ENCODE measurements at regions of chr9 and their contacts with region 1.

Region 1: DNA sequence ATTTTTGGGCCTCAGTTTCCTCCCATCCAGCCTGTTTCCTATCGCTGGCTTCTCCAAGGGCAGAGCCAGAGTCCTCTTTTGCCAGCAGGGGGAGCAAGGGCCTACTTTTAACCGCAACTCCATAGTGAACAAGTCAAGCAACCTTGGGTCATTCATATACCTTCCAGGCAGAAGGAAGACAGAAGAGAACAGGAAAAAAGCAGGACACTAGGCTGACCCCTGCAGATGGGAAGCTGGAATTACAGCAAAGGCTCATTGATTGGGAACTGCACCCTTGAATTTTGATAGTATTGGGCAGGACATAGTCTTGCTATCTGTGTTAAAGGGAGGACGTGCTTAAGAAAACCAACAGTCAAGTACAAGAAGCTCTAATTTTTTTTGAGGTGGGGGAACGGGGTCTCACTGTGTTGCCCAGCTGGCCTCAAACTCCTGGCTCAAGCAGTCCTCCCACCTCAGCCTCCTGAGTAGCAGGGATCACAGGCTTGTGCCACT is 30.1 kb downstream of the QRFP start:
- DNase-seq: peak; percentile 76 to 82
- ATAC-seq: peak; percentile 54
- H3K4me3 ChIP-seq: no peak overlapping the region
- H3K27ac ChIP-seq: no peak overlapping the region
- H3K4me1 ChIP-seq: no peaks in the 10 kb centered on the region
- H3K27me3 ChIP-seq: no peaks in the 10 kb centered on the region

Region 2: GRCh38 chr9:130172161-130172857 is 694.2 kb before region 1 on chr9 and contains the start of gene NCS1:
- intact Hi-C with region 1: no loop called
- DNase-seq: peak; percentile 85 to 95
- ATAC-seq: peak; percentile 78
- H3K4me3 ChIP-seq: peak within 1 kb of the TSS; percentile 75 to 85
- H3K27ac ChIP-seq: peak within 1 kb of the TSS; percentile 15 to 86
- H3K4me1 ChIP-seq: peaks cover 0 to 5% of the 10 kb centered on the region in 2 donors
- H3K27me3 ChIP-seq: no peaks in the 10 kb centered on the region
- total RNA-seq, gene NCS1: 72.1 to 171 TPM

Region 3: GRCh38 chr9:130770679-130771442 is 95.7 kb before region 1 on chr9:
- intact Hi-C with region 1: loop called (anchors 2 kb)
- DNase-seq: no peak
- ATAC-seq: peak; percentile 83
- H3K4me3 ChIP-seq: no peak overlapping the region
- H3K27ac ChIP-seq: no peak overlapping the region
- H3K4me1 ChIP-seq: no peaks in the 10 kb centered on the region
- H3K27me3 ChIP-seq: no peaks in the 10 kb centered on the region

Measured in aorta (tissue), 5 donors.